ENCODE measurements at regions of chr6 and their contacts with region 1.

Region 1: DNA sequence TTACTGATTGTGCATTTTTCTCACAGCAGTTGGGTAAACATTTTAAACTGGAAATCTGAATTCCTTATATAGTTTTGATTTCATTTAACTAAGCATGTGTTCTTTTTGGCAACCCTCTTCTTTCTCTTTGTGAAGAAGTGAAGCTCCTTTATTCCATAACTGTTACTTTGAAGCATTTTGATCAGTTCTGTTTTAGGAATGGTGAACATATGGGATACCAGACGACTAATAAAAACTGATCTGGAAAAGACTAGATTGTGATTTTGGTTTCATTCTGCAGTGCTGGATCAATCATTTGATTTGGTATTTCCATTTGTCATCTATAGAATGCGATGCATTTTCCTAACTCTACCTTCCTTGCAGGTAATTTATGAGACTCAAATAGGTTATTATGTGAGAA is 9.8 kb downstream of the AFG1L start:
- DNase-seq: no peak
- ATAC-seq: no peak
- H3K4me3 ChIP-seq: no peak overlapping the region
- H3K27ac ChIP-seq: no peak overlapping the region
- H3K4me1 ChIP-seq: peaks cover 2% of the 10 kb centered on the region; the same call in 1 of the 2 replicates
- H3K27me3 ChIP-seq: no peaks in the 10 kb centered on the region
- CTCF ChIP-seq: no peak
- EP300 ChIP-seq: no peak
- POLR2A ChIP-seq: no peak
- RAD21 ChIP-seq: no peak

Region 2: GRCh38 chr6:108118810-108119768 is 185.6 kb before region 1 on chr6:
- CTCF ChIA-PET with region 1: no interaction called
- POLR2A ChIA-PET with region 1: no interaction called
- RAD21 ChIA-PET with region 1: no interaction called
- SMC1A ChIA-PET with region 1: no interaction called
- in situ Hi-C with region 1: no loop called
- intact Hi-C with region 1: no loop called
- DNase-seq: no peak
- ATAC-seq: no peak
- H3K4me3 ChIP-seq: peak overlapping the region; percentile 35; the same call in 1 of the 2 replicates
- H3K27ac ChIP-seq: no peak overlapping the region
- H3K4me1 ChIP-seq: peaks cover 4% of the 10 kb centered on the region; the same call in 1 of the 2 replicates
- H3K27me3 ChIP-seq: peaks cover 39 to 44% of the 10 kb centered on the region in 2 experiments
- CTCF ChIP-seq: no peak
- EP300 ChIP-seq: no peak
- POLR2A ChIP-seq: no peak
- RAD21 ChIP-seq: no peak

Region 3: GRCh38 chr6:108337721-108338120 is 33.1 kb after region 1 on chr6:
- CTCF ChIA-PET with region 1: no interaction called
- POLR2A ChIA-PET with region 1: no interaction called
- RAD21 ChIA-PET with region 1: no interaction called
- SMC1A ChIA-PET with region 1: no interaction called
- in situ Hi-C with region 1: no loop called
- intact Hi-C with region 1: loop called (anchors 2 kb)
- DNase-seq: no peak
- ATAC-seq: no peak
- H3K4me3 ChIP-seq: no peak overlapping the region
- H3K27ac ChIP-seq: no peak overlapping the region
- H3K4me1 ChIP-seq: peaks cover 13% of the 10 kb centered on the region
- H3K27me3 ChIP-seq: no peaks in the 10 kb centered on the region
- CTCF ChIP-seq: no peak
- EP300 ChIP-seq: no peak
- POLR2A ChIP-seq: no peak
- RAD21 ChIP-seq: no peak

Region 4: DNA sequence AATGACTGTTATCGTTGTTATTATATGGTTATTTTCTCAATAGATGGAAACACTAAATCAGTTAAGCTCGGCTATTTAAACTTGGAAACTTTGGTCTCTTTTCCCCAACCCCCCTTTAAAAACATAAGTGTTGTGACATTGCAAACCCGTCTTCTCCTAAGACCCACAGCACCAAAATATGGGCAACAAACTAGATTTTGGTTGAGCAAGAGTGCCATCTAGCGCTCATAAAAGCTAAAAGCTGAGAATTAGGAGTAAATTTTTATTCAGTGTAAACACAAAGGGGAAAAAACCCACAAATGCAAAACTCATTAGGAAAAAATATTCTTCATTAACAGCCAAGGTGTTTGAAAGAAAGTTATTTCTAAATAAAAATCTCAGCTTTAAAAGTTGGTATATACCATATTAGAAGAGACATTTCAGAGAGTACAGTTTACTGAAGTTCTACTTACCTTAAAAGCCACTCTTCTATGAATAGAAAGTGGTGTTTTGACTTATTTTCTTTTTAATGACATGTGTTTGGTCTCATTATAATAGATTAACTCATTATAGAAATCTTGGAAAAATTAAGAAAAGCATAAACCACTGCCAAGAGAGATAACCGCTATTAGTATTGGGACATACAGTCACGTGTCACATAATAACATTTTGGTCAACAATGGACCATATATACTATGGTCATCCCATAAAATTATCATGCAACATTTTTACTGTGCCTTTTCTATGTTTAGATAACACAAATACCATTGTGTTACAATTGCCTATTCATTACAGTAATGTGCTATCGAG is 768.9 kb after region 1 on chr6:
- CTCF ChIA-PET with region 1: no interaction called
- POLR2A ChIA-PET with region 1: no interaction called
- RAD21 ChIA-PET with region 1: no interaction called
- SMC1A ChIA-PET with region 1: no interaction called
- in situ Hi-C with region 1: no loop called
- intact Hi-C with region 1: no loop called
- DNase-seq: no peak
- ATAC-seq: peak; percentile 61; the same call in 2 of the 3 replicates
- H3K4me3 ChIP-seq: no peak overlapping the region
- H3K27ac ChIP-seq: no peak overlapping the region
- H3K4me1 ChIP-seq: no peaks in the 10 kb centered on the region
- H3K27me3 ChIP-seq: 0 out of 4 replicates have a peak, but pooled peaks cover 0 to 1% of the 10 kb centered on the region in 2 experiments
- CTCF ChIP-seq: peak; percentile 48 to 75 (median 60)
- EP300 ChIP-seq: no peak
- POLR2A ChIP-seq: no peak
- RAD21 ChIP-seq: peak; percentile 86